ENCODE measurements at regions of chr9 and their contacts with region 1.

Region 1: DNA sequence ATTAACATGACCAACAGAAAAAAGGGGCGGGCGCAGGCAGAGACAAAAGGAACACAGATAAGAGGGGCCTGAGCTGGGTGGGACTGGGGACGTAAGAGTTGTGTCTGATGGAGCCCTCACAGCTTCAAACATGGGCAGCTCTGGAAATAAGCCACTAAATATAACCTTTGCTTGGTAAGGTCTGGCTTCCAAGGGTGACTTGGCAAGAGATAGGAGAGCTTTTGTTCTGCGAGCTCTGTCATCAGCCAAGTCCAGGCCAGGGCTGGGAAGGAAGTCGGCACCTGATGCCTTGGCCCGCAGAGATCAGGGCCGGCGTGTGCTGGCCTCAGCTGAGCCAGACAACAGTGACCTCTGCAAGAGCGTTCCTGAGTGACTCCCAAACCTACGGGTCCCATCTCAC is 11.8 kb downstream of the TRUB2 start:
- DNase-seq: no peak
- ATAC-seq: no peak
- H3K4me3 ChIP-seq: no peak overlapping the region
- H3K4me3 Mint-ChIP-seq: no peak overlapping the region
- H3K27ac ChIP-seq: no peak overlapping the region
- H3K27ac Mint-ChIP-seq: no peak overlapping the region
- H3K4me1 ChIP-seq: no peaks in the 10 kb centered on the region
- H3K4me1 Mint-ChIP-seq: no peaks in the 10 kb centered on the region
- H3K27me3 ChIP-seq: no peaks in the 10 kb centered on the region
- H3K27me3 Mint-ChIP-seq: no peaks in the 10 kb centered on the region

Region 2: DNA sequence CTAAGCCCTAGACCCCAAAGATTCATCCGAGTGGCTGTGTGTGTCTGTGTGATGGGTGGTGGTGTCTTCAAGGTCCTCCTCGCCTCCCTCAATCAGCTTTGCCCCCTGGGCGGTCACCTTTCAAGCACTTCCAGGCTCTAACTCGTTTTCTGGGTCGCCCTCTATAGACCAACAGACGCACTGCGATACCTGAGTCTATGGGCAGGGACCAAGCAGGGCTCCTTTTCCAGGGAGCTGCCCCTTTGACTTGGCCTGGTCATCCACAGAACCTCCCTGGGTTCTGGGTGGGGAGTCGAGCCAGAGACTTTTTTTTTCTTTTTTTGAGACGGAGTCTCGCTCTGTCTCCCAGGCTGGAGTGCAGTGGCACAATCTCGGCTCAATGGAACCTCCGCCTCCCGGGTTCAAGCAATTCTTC is 31.0 kb after region 1 on chr9:
- CTCF ChIA-PET with region 1: interaction called in 1 of 2 experiments, 10 read pairs
- POLR2A ChIA-PET with region 1: no interaction called
- DNase-seq: peak; percentile 14 to 79 (median 55)
- ATAC-seq: peak; percentile 38 to 46 (median 42)
- H3K4me3 ChIP-seq: peak overlapping the region; percentile 69 to 87
- H3K4me3 Mint-ChIP-seq: peak overlapping the region; percentile 82 to 97 (median 90)
- H3K27ac ChIP-seq: peak overlapping the region; percentile 38
- H3K27ac Mint-ChIP-seq: peak overlapping the region; percentile 83 to 89
- H3K4me1 ChIP-seq: peaks cover 7 to 19% of the 10 kb centered on the region in 2 experiments
- H3K4me1 Mint-ChIP-seq: peaks cover 8 to 9% (median 8%) of the 10 kb centered on the region in 3 donors
- H3K27me3 ChIP-seq: no peaks in the 10 kb centered on the region
- H3K27me3 Mint-ChIP-seq: no peaks in the 10 kb centered on the region